Panc1 (cell line): ENCODE measurements at regions of chr19 and their contacts with region 1.

Region 1: DNA sequence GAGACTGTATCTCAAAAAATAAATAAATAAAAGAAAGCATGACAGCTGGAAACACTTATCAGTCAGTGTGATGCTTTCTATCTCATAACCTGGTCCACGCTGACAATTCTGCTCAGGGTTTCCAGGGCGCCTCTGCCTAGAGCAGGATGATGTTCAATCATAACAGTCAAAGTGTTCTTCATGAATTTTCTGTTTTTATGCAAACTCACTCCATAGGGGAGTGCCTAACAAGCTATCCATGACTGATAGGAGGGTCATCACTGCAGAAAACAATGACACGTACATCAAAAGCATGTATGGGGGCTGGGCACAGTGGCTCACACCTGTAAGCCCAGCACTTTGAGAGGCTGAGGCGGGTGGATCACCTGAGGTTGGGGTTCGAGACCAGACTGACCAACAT is 41.4 kb upstream of the ZNF83 start:
- DNase-seq: no peak
- ATAC-seq: no peak
- H3K4me3 ChIP-seq: no peak overlapping the region
- H3K27ac ChIP-seq: no peak overlapping the region
- H3K4me1 ChIP-seq: no peaks in the 10 kb centered on the region
- H3K27me3 ChIP-seq: no peaks in the 10 kb centered on the region
- CTCF ChIP-seq: no peak

Region 2: GRCh38 chr19:52231154-52231910 is 448.3 kb before region 1 on chr19:
- CTCF ChIA-PET with region 1: no interaction called
- POLR2A ChIA-PET with region 1: no interaction called
- in situ Hi-C with region 1: no loop called
- intact Hi-C with region 1: no loop called
- DNase-seq: no peak
- ATAC-seq: no peak; the same call in 1 of the 2 replicates
- H3K4me3 ChIP-seq: no peak overlapping the region
- H3K27ac ChIP-seq: no peak overlapping the region
- H3K4me1 ChIP-seq: no peaks in the 10 kb centered on the region
- H3K27me3 ChIP-seq: no peaks in the 10 kb centered on the region
- CTCF ChIP-seq: no peak

Region 3: DNA sequence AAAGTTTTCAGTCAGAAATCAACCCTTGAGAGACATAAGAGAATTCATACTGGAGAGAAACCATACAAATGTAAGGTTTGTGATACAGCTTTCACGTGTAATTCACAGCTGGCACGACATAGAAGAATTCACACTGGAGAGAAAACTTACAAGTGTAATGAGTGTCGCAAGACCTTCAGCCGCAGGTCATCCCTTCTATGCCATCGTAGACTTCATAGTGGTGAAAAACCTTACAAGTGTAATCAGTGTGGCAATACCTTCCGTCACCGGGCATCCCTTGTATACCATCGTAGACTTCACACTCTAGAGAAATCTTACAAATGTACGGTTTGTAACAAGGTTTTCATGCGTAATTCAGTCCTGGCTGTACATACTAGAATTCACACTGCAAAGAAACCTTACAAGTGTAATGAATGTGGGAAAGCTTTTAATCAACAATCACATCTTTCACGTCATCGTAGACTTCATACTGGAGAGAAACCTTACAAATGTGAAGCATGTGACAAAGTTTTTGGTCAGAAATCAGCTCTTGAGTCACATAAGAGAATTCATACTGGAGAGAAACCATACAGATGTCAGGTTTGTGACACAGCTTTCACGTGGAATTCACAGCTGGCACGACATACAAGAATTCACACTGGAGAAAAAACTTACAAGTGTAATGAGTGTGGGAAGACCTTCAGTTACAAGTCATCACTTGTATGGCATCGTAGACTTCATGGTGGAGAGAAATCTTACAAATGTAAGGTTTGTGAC is 125.2 kb before region 1 on chr19:
- CTCF ChIA-PET with region 1: no interaction called
- POLR2A ChIA-PET with region 1: no interaction called
- in situ Hi-C with region 1: no loop called
- intact Hi-C with region 1: no loop called
- DNase-seq: no peak
- ATAC-seq: no peak
- H3K4me3 ChIP-seq: no peak overlapping the region
- H3K27ac ChIP-seq: no peak overlapping the region
- H3K4me1 ChIP-seq: no peaks in the 10 kb centered on the region
- H3K27me3 ChIP-seq: no peaks in the 10 kb centered on the region
- CTCF ChIP-seq: no peak

Region 4: GRCh38 chr19:52570000-52570861 is 109.4 kb before region 1 on chr19 and contains the start of gene ZNF701:
- CTCF ChIA-PET with region 1: no interaction called
- POLR2A ChIA-PET with region 1: interaction called, 18 read pairs
- in situ Hi-C with region 1: no loop called
- intact Hi-C with region 1: no loop called
- DNase-seq: peak; percentile 45
- ATAC-seq: peak; percentile 99
- H3K4me3 ChIP-seq: peak within 1 kb of the TSS; percentile 80 to 96
- H3K27ac ChIP-seq: peak within 1 kb of the TSS; percentile 90
- H3K4me1 ChIP-seq: no peaks in the 10 kb centered on the region
- H3K27me3 ChIP-seq: no peaks in the 10 kb centered on the region
- CTCF ChIP-seq: no peak
- total RNA-seq, gene ZNF701: 16.4 TPM